ENCODE measurements at regions of chr19 and their contacts with region 1.

Region 1: DNA sequence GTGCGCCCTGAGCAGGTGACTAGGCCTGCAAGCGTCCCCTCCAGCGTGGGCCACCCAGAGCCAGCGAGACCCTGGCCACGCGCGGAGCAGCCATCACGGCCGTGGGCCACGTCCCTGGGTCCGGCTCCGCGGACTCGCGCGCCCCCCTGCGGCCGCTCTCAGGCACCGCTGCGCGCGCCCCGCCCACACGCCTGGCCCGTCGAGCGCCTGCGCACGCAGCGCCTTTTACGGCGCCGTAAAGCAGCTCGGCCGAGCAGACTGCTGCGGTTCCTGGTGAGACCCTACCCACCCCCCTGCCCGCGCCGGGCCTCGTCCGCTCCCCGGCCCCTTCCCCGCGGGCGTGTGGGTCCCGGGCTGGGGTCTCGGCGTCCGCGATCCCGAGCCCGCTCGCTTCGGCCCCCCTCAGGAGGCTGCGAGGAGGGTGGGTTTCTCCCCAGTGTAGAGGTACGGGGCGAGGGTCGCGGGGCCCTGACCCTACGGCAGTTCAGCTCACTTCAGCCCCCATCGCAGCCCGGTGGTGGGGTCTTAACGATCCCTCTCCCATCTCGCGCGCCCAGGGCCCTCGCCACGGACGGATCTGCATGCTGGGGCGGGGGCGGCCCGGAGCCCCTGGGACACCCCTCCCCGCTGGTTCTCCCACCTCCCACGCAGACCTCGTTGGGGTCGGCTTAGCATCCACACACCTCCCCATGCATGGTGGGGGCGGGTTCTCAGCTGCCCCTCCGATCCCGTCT is at the start of gene TRAPPC5:
- DNase-seq: peak; percentile 98
- H3K4me3 ChIP-seq: peak within 1 kb of the TSS; percentile 87 to 92
- H3K27ac ChIP-seq: peak within 1 kb of the TSS in 1 of 2 experiments; percentile 72; a peak in 1 of 4 replicates
- H3K4me1 ChIP-seq: peaks cover 0 to 13% of the 10 kb centered on the region in 2 experiments; a peak in 1 of 4 replicates
- H3K27me3 ChIP-seq: peaks cover 28% of the 10 kb centered on the region
- CTCF ChIP-seq: peak; percentile 87
- EP300 ChIP-seq: no peak
- RAD21 ChIP-seq: peak; percentile 82
- polyA plus RNA-seq, gene TRAPPC5: 44.1 and 49.4 TPM in 2 replicates

Region 2: DNA sequence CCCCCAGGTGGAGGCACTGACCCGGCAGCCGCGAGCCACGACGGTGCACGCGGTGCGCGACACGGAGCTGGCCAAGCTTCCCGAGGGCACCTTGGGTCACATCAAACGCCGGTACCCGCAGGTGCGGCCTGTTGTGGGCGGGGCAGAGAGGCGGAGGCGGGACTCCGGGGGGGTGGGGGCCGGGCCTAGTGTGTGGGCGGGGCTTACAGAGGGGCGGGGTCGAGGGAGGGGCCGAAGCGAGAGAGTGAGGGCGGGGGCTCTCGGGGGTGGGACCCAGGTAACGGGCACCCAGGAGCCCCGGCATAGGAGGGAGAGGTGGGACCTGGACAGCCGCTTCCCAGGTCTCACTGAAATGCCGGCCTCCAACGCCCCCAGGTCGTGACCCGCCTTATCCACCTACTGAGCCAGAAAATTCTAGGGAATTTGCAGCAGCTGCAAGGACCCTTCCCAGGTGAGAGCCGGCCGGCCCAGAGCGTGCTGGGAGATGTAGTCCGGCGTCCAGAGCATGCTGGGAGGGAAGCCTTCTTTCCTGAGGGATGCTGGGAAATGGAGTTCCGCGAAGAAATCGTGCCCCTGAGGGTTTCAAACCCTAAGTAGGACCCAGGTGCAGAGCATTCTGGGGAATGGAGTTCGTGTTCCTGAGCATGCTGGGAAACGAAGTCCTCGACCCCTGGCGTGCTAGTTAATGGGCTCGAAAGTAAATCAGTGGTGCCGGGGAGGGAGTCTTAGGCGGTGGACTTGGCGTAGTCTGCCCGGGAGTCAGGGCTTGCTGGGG is 129.6 kb before region 1 on chr19:
- CTCF ChIA-PET with region 1: interaction called, 18 read pairs
- POLR2A ChIA-PET with region 1: no interaction called
- DNase-seq: peak; percentile 98
- H3K4me3 ChIP-seq: peak overlapping the region in 1 of 2 experiments; percentile 32; a peak in 1 of 4 replicates
- H3K27ac ChIP-seq: peak overlapping the region in 1 of 2 experiments; percentile 34; a peak in 1 of 4 replicates
- H3K4me1 ChIP-seq: no peaks in the 10 kb centered on the region; a peak in 1 of 4 replicates
- H3K27me3 ChIP-seq: no peaks in the 10 kb centered on the region
- CTCF ChIP-seq: no peak
- EP300 ChIP-seq: no peak
- RAD21 ChIP-seq: no peak

Region 3: GRCh38 chr19:7618771-7619514 is 61.8 kb before region 1 on chr19:
- CTCF ChIA-PET with region 1: interaction called, 11 read pairs
- POLR2A ChIA-PET with region 1: no interaction called
- DNase-seq: peak; percentile 87
- H3K4me3 ChIP-seq: no peak overlapping the region
- H3K27ac ChIP-seq: peak overlapping the region in 1 of 2 experiments; percentile 98; a peak in 2 of 4 replicates
- H3K4me1 ChIP-seq: peaks cover 0 to 42% of the 10 kb centered on the region in 2 experiments; a peak in 1 of 4 replicates
- H3K27me3 ChIP-seq: no peaks in the 10 kb centered on the region
- CTCF ChIP-seq: no peak
- EP300 ChIP-seq: peak in 1 of 2 experiments; percentile 51; a peak in 2 of 4 replicates
- RAD21 ChIP-seq: no peak

Region 4: DNA sequence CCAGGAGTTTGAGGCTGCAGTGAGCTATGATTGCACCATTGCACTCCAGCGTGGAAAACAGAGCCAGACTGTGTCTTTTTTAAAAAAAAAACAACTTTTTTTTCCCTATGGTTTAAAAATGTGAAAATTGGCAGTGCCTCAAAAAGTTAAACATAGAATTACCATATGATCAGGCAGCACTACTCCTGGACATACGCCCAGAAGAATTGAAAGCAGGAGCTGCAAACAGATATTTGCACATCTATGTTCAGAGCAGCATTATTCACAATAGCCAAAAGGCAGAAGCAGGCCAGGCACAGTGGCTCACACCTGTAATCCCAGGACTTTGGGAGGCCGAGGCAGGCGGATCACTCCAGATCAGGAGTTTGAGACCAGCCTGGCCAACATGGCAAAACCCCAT is 15.7 kb before region 1 on chr19:
- CTCF ChIA-PET with region 1: interaction called, 10 read pairs
- POLR2A ChIA-PET with region 1: no interaction called
- DNase-seq: no peak
- H3K4me3 ChIP-seq: no peak overlapping the region
- H3K27ac ChIP-seq: no peak overlapping the region
- H3K4me1 ChIP-seq: no peaks in the 10 kb centered on the region
- H3K27me3 ChIP-seq: peaks cover 79% of the 10 kb centered on the region
- CTCF ChIP-seq: no peak
- EP300 ChIP-seq: no peak
- RAD21 ChIP-seq: no peak

Region 5: GRCh38 chr19:7701654-7702457 is 21.1 kb after region 1 on chr19 and contains the start of gene FCER2:
- CTCF ChIA-PET with region 1: interaction called, 13 read pairs
- POLR2A ChIA-PET with region 1: no interaction called
- DNase-seq: no peak
- H3K4me3 ChIP-seq: no peak within 1 kb of the TSS
- H3K27ac ChIP-seq: no peak within 1 kb of the TSS
- H3K4me1 ChIP-seq: no peaks in the 10 kb centered on the region
- H3K27me3 ChIP-seq: peaks cover 84% of the 10 kb centered on the region
- CTCF ChIP-seq: no peak
- EP300 ChIP-seq: no peak
- RAD21 ChIP-seq: no peak
- polyA plus RNA-seq, gene FCER2: not detected in 2 replicates

Region 6: GRCh38 chr19:7718668-7719067 is 37.9 kb after region 1 on chr19:
- CTCF ChIA-PET with region 1: no interaction called
- POLR2A ChIA-PET with region 1: no interaction called
- DNase-seq: no peak
- H3K4me3 ChIP-seq: no peak overlapping the region
- H3K27ac ChIP-seq: no peak overlapping the region
- H3K4me1 ChIP-seq: no peaks in the 10 kb centered on the region
- H3K27me3 ChIP-seq: peaks cover 61% of the 10 kb centered on the region
- CTCF ChIP-seq: no peak
- EP300 ChIP-seq: no peak
- RAD21 ChIP-seq: no peak